ENCODE measurements at regions of chr12 and their contacts with region 1.

Region 1: GRCh38 chr12:23303821-23304220 is 645.6 kb downstream of the SOX5 start:
- DNase-seq: no peak
- H3K4me3 ChIP-seq: no peak overlapping the region
- H3K27ac ChIP-seq: no peak overlapping the region
- H3K4me1 ChIP-seq: no peaks in the 10 kb centered on the region
- H3K27me3 ChIP-seq: no peaks in the 10 kb centered on the region
- CTCF ChIP-seq: no peak
- POLR2A ChIP-seq: no peak

Region 2: GRCh38 chr12:24066865-24067264 is 763.0 kb after region 1 on chr12:
- CTCF ChIA-PET with region 1: no interaction called
- POLR2A ChIA-PET with region 1: no interaction called
- dilution Hi-C with region 1: no loop called
- intact Hi-C with region 1: no loop called
- DNase-seq: peak; percentile 66
- H3K4me3 ChIP-seq: no peak overlapping the region
- H3K27ac ChIP-seq: no peak overlapping the region
- H3K4me1 ChIP-seq: peaks cover 7% of the 10 kb centered on the region
- H3K27me3 ChIP-seq: no peaks in the 10 kb centered on the region
- CTCF ChIP-seq: no peak
- POLR2A ChIP-seq: no peak

Region 3: GRCh38 chr12:24244801-24245200 is 941.0 kb after region 1 on chr12:
- CTCF ChIA-PET with region 1: no interaction called
- POLR2A ChIA-PET with region 1: no interaction called
- dilution Hi-C with region 1: no loop called
- intact Hi-C with region 1: loop called (anchors 5 kb)
- DNase-seq: no peak
- H3K4me3 ChIP-seq: no peak overlapping the region
- H3K27ac ChIP-seq: no peak overlapping the region
- H3K4me1 ChIP-seq: no peaks in the 10 kb centered on the region
- H3K27me3 ChIP-seq: no peaks in the 10 kb centered on the region
- CTCF ChIP-seq: no peak
- POLR2A ChIP-seq: no peak